Activated naive CD4-positive, alpha-beta T cell treated with anti-CD3 and anti-CD28 coated beads for 36 hours (primary cell): ENCODE measurements at regions of chr1 and their contacts with region 1.

Region 1: DNA sequence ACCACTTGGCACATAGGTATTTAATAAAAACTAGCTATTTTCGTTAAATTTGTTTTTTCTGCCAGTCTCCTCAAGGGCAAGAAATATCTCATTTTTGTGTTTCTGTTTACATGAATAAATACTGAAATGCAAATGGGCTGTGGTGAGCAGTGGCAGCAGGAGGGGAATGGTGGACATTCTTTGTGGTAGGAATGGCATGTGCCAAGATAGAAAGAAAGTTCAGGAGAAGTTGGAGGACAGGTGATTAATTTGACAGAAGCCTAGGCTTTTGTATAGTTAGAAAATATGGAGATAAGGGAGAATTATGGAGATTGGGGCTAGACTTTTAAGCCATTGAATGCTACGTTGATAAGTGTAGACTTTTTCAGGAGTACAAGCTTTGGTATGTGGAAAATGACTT is 8.6 kb downstream of the RAP1A start:
- DNase-seq: no peak
- H3K4me3 Mint-ChIP-seq: peak overlapping the region; percentile 39
- H3K27ac Mint-ChIP-seq: peak overlapping the region; percentile 69
- H3K4me1 Mint-ChIP-seq: peaks cover 88% of the 10 kb centered on the region
- H3K27me3 Mint-ChIP-seq: no peaks in the 10 kb centered on the region

Region 2: DNA sequence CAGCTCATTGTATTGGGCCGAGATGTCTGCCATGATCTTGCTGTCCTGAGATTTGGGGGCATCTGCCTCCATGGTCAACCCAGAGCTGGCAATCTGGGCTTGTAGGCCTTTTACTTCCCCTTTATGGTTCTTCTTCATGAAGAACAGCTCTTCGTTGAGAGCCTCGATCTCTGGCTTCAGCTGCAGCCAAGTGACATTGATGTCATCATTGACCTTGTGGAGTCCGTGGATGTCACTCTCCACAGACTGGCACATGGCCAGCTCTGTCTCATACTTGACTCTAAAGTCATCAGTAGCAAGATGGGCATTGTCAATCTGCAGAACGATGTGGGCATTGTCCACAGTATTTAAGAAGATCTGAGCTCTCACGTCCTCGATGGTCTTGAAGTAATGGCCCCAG is 20.7 kb after region 1 on chr1:
- CTCF ChIA-PET with region 1: interaction called, 4 read pairs
- intact Hi-C with region 1: loop called (anchors 2 kb)
- DNase-seq: no peak
- H3K4me3 Mint-ChIP-seq: no peak overlapping the region
- H3K27ac Mint-ChIP-seq: peak overlapping the region; percentile 43
- H3K4me1 Mint-ChIP-seq: peaks cover 77% of the 10 kb centered on the region
- H3K27me3 Mint-ChIP-seq: no peaks in the 10 kb centered on the region

Region 3: DNA sequence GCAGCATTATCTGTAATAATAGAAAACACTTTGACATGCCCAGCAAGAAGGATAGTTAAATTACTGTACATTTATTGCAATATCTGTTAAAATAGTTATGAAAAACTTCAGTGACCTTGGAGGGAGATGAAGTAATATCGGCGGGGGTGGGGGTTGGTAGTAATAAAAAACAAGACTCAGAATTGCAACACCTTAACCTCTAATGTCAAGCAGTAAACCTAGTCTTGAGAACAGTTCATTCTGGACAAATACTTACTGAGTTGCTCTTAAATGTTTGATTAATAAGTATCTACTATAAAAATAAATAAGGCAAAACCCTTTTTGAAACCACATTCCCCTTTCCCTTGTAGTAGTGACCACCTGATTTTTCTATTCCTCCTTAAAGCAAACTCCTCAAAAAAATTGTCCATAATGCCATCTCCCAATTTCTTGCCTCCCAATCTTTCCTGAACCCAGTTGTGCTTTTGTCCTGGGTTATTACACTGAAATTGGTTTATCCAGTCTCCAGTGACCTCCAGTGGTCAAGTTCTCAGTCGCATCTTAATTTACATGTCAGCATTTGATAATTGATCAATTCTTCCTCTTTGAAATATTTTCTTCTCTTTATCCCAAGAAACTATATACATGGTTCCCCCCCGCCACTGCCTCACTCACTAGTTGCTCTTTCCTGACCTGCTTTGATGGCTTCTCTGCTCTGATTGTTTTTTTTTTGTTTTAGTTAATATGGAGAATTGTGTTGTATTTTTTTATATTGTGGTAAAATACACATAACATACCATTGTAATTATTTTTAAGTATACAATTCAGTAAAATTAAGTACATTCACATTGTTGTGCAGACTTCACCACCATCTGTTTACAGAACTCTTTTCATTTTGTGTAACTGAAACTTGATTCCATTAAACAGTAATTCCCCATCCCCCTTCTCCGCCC is 28.2 kb after region 1 on chr1:
- CTCF ChIA-PET with region 1: no interaction called
- intact Hi-C with region 1: loop called (anchors 2 kb)
- DNase-seq: peak; percentile 23
- H3K4me3 Mint-ChIP-seq: no peak overlapping the region
- H3K27ac Mint-ChIP-seq: no peak overlapping the region
- H3K4me1 Mint-ChIP-seq: peaks cover 40% of the 10 kb centered on the region
- H3K27me3 Mint-ChIP-seq: no peaks in the 10 kb centered on the region

Region 4: GRCh38 chr1:111801071-111801841 is 173.1 kb after region 1 on chr1:
- CTCF ChIA-PET with region 1: no interaction called
- intact Hi-C with region 1: no loop called
- DNase-seq: no peak
- H3K4me3 Mint-ChIP-seq: no peak overlapping the region
- H3K27ac Mint-ChIP-seq: no peak overlapping the region
- H3K4me1 Mint-ChIP-seq: no peaks in the 10 kb centered on the region
- H3K27me3 Mint-ChIP-seq: peaks cover 3% of the 10 kb centered on the region